Dorsolateral prefrontal cortex (tissue), 120 donors: ENCODE measurements at regions of chr20 and their contacts with region 1.

Region 1: GRCh38 chr20:23357767-23358591 is 4.0 kb upstream of the GZF1 start:
- DNase-seq: peak; percentile 99 to 100 (median 100)
- H3K4me3 ChIP-seq: peak overlapping the region; percentile 47 to 97 (median 77)
- H3K27ac ChIP-seq: peak overlapping the region; percentile 63 to 100 (median 95)
- H3K27me3 ChIP-seq: no peaks in the 10 kb centered on the region
- CTCF ChIP-seq: peak in 40 of 56 donors; percentile 3 to 58 (median 26)

Region 2: DNA sequence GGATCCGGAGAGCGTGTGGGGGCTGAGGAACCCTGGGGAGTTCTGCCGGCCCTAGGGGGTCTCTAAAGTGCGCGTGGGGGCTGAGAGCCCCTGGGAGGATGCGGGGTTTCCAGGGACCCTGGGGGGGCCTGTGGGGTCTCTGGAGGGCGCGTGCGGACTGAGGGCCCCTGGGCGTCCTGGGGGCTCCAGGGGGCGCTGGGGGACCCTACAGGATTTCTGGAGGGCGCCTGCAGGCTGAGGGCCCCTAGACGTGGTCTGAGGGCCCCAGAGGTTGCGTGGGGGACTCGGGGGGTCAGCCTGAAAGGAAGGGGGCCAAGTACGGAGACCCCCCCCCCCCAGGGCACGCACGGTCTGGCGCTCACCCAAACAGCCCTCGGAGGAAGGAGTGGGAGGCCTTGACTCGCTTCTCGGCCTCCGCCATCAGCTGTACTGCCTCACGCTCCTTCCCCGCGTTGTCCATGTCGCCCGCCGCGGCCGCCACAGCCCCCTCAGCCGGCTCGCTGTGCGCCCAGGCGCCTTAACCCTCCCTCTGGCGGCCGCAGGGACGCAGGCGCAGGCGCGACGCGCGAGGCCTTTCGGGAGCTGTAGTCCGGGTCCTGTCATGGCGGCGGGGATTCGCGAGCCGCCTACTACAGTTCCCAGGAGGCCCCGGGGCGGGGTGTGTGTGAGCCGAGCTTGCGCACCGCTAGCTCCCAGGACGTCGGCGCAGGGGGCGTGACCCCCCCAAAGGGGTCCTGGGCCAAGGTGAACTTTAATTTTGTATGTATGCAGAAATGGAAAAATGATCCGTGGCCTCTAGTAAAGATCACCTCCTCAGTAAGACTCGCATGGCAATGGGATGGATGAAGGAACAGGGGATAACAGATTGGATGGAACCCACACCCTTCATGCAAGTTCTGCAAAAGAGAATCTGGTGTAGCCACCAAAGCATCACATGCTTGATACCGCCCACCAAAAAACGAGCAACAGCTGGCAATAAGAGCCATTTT is 63.3 kb after region 1 on chr20 and contains the start of gene NAPB:
- intact Hi-C with region 1: loop called (anchors 2 to 5 kb)
- DNase-seq: peak; percentile 94 to 99 (median 96)
- H3K4me3 ChIP-seq: peak within 1 kb of the TSS; percentile 70 to 97 (median 90)
- H3K27ac ChIP-seq: peak within 1 kb of the TSS in 58 of 59 donors; percentile 40 to 94 (median 84)
- H3K27me3 ChIP-seq: no peaks in the 10 kb centered on the region
- CTCF ChIP-seq: peak in 55 of 56 donors; percentile 21 to 69 (median 55)
- total RNA-seq, gene NAPB: 68.5 to 495 (median 303) TPM